Panc1 (cell line): ENCODE measurements at regions of chr1 and their contacts with region 1.

Region 1: DNA sequence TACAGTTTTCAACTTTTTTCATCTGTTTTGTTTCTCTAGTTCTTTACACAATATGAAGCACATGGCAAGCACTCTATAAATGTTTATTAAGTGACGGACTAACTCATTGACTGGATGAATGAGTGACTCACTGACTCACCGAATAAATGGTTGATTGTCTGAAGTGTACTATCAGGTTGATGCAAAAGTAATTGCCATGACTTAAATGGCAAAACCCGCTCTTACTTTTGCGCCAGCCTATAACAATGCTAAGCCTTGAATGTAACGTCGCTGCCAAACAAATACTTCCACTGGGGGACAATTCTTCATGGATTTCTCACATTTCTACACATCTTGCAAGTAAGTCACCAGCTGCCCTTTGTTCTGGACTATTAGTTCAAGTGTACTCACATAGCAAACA is 109.0 kb upstream of the KCTD3 start:
- DNase-seq: no peak
- ATAC-seq: no peak
- H3K4me3 ChIP-seq: no peak overlapping the region
- H3K27ac ChIP-seq: no peak overlapping the region
- H3K4me1 ChIP-seq: no peaks in the 10 kb centered on the region
- H3K27me3 ChIP-seq: no peaks in the 10 kb centered on the region
- CTCF ChIP-seq: no peak

Region 2: DNA sequence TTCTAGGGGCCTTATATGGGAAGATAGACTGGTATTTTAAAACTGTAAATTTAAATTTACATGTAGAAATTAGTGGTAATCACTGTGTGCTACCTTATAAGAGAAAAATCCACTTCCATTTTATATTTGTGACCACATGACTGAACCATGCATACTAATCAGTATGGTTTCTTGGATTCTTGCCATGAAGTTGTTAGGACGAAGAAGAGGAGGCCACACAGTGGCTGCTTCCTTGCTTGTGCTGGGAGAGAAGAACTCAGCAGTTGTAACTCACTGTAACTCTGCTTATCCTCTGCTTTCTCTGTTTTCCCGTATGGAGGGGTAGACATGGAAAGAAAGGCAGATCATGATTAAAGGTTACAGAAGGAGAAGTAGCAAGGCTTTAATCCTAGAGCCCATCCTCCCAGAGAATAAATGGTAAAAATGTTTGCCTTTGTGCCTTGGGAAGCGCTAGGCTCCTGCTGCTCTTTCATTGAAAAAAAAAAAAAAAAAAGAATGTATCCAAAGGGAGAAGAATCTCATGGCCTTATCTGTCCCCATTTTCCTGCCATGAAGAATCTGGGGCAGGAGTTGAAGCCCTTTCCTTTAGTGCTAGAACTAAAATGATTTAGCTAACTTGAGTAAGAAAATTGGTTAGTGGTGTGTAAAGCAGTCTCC is 141.4 kb after region 1 on chr1:
- CTCF ChIA-PET with region 1: interaction called, 10 read pairs
- POLR2A ChIA-PET with region 1: no interaction called
- in situ Hi-C with region 1: no loop called
- intact Hi-C with region 1: no loop called
- DNase-seq: no peak
- ATAC-seq: no peak
- H3K4me3 ChIP-seq: no peak overlapping the region
- H3K27ac ChIP-seq: no peak overlapping the region
- H3K4me1 ChIP-seq: no peaks in the 10 kb centered on the region; the same call in 1 of the 2 replicates
- H3K27me3 ChIP-seq: no peaks in the 10 kb centered on the region
- CTCF ChIP-seq: no peak